Sigmoid colon (tissue), 7 donors: ENCODE measurements at regions of chr14 and their contacts with region 1.

Region 1: GRCh38 chr14:68191567-68192321 is 372.2 kb downstream of the RAD51B start:
- DNase-seq: no peak
- H3K4me3 ChIP-seq: no peak overlapping the region
- H3K27ac ChIP-seq: peak overlapping the region in 3 of 4 donors; percentile 82 to 87 (median 85)
- H3K4me1 ChIP-seq: peaks cover 0 to 57% (median 36%) of the 10 kb centered on the region in 4 donors
- H3K27me3 ChIP-seq: no peaks in the 10 kb centered on the region
- CTCF ChIP-seq: no peak
- EP300 ChIP-seq: peak; percentile 71 to 92 (median 86)
- POLR2A ChIP-seq: no peak

Region 2: DNA sequence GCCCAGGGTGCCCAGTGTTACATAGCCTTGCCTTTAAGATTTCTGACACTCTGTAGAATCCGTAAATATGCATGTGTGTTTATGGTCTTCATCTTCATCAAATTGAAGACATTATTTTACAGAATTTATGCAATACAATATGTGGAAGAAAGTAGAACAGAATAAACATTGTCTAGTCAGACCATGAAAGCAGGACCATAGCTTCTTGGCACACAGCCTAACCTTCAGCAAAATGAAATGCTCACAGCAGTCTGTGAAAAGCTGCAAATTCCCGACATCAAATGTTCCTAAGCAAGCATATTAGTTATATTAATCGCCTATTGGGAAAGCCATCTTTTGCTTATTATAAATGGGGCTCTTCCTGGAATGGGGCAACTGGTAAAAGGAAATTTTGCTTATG is 1113.8 kb before region 1 on chr14:
- intact Hi-C with region 1: no loop called
- DNase-seq: no peak
- H3K4me3 ChIP-seq: no peak overlapping the region
- H3K27ac ChIP-seq: no peak overlapping the region
- H3K4me1 ChIP-seq: no peaks in the 10 kb centered on the region
- H3K27me3 ChIP-seq: no peaks in the 10 kb centered on the region
- CTCF ChIP-seq: no peak
- EP300 ChIP-seq: no peak
- POLR2A ChIP-seq: no peak

Region 3: GRCh38 chr14:67943947-67944346 is 247.8 kb before region 1 on chr14:
- intact Hi-C with region 1: loop called (anchors 5 kb)
- DNase-seq: peak; percentile 94
- H3K4me3 ChIP-seq: no peak overlapping the region
- H3K27ac ChIP-seq: peak overlapping the region; percentile 29 to 86 (median 82)
- H3K4me1 ChIP-seq: peaks cover 0 to 57% (median 51%) of the 10 kb centered on the region in 4 donors
- H3K27me3 ChIP-seq: no peaks in the 10 kb centered on the region
- CTCF ChIP-seq: peak; percentile 61 to 95 (median 88)
- EP300 ChIP-seq: no peak
- POLR2A ChIP-seq: no peak

Region 4: DNA sequence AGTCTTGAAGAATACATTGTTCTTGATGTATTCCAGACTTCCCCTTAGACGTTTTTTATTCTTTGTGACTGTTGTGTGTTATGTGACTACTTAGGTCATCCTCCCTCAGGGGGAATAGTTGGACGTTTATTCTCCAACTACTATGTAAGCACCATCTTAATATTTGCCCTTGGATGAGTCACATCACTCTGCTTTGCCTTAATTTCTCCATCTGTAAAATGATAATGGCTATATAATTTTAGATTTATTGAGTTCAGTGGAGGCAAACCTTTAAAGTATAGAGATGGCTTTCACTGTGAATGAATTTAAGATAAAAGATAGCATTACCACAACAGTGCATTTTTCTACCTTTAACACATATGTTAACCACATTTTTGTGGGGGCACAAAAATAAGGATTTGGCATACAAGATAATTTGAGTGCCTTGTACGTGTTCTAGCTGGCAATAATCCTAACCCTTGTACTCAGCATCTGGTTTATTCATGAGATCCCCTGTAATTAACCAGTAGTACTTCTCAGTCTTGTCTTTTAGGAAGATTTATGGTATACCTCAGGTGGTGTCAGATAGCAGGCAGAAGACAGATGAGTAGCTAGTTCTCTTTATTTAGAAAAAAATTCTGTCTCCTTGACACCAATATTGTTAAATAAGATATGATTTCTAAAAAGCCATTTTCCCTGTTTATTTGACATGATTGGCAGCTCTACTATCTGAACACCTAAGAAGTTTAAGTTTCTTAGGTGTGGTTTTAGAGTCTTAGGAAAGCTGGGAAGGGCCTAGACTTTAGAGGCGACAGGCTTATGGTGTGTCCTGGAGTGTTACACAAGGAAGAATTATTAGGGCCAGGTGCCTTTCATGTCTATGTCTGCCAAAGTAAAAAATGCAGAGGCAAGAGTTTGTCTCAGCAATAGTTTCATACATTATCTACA is 219.9 kb before region 1 on chr14:
- intact Hi-C with region 1: no loop called
- DNase-seq: no peak
- H3K4me3 ChIP-seq: no peak overlapping the region
- H3K27ac ChIP-seq: peak overlapping the region in 3 of 4 donors; percentile 74 to 80 (median 78)
- H3K4me1 ChIP-seq: peaks cover 0 to 39% (median 28%) of the 10 kb centered on the region in 4 donors
- H3K27me3 ChIP-seq: no peaks in the 10 kb centered on the region
- CTCF ChIP-seq: no peak
- EP300 ChIP-seq: peak; percentile 52 to 88 (median 70)
- POLR2A ChIP-seq: no peak

Region 5: DNA sequence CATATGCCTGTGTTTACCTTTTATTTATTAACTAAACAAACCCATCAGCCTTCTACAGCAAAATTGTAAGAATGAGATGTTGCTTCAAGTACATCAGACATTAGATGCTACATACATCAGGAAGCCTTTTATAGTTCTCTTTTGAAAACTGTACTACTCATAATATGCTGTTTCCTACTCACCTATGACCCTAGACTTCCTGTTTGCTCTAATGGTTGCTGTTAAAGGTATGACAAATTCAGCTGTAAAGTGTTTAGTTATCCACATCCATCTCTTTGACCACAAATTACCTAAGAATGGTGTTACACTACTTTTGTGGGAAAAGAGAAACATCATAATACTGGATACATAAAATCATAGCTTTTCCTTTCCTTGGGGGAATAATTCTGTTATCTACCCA is 152.2 kb before region 1 on chr14:
- intact Hi-C with region 1: loop called (anchors 5 kb)
- DNase-seq: no peak
- H3K4me3 ChIP-seq: no peak overlapping the region
- H3K27ac ChIP-seq: peak overlapping the region; percentile 22 to 90 (median 85)
- H3K4me1 ChIP-seq: peaks cover 0 to 92% (median 61%) of the 10 kb centered on the region in 4 donors
- H3K27me3 ChIP-seq: no peaks in the 10 kb centered on the region
- CTCF ChIP-seq: no peak
- EP300 ChIP-seq: no peak
- POLR2A ChIP-seq: no peak

Region 6: GRCh38 chr14:68137704-68138619 is 53.8 kb before region 1 on chr14:
- intact Hi-C with region 1: loop called (anchors 2 kb)
- DNase-seq: peak; percentile 81
- H3K4me3 ChIP-seq: no peak overlapping the region
- H3K27ac ChIP-seq: peak overlapping the region; percentile 86 to 92 (median 88)
- H3K4me1 ChIP-seq: peaks cover 0 to 72% (median 60%) of the 10 kb centered on the region in 4 donors
- H3K27me3 ChIP-seq: no peaks in the 10 kb centered on the region
- CTCF ChIP-seq: no peak
- EP300 ChIP-seq: no peak
- POLR2A ChIP-seq: no peak

Region 7: GRCh38 chr14:68234101-68234905 is 42.6 kb after region 1 on chr14:
- intact Hi-C with region 1: no loop called
- DNase-seq: no peak
- H3K4me3 ChIP-seq: no peak overlapping the region
- H3K27ac ChIP-seq: peak overlapping the region; percentile 79 to 88 (median 82)
- H3K4me1 ChIP-seq: peaks cover 0 to 68% (median 57%) of the 10 kb centered on the region in 4 donors
- H3K27me3 ChIP-seq: no peaks in the 10 kb centered on the region
- CTCF ChIP-seq: no peak
- EP300 ChIP-seq: no peak
- POLR2A ChIP-seq: no peak

Region 8: GRCh38 chr14:68526420-68527105 is 334.8 kb after region 1 on chr14:
- intact Hi-C with region 1: loop called (anchors 5 kb)
- DNase-seq: no peak
- H3K4me3 ChIP-seq: no peak overlapping the region
- H3K27ac ChIP-seq: peak overlapping the region; percentile 49 to 73 (median 66)
- H3K4me1 ChIP-seq: peaks cover 0 to 52% (median 38%) of the 10 kb centered on the region in 4 donors
- H3K27me3 ChIP-seq: no peaks in the 10 kb centered on the region
- CTCF ChIP-seq: no peak
- EP300 ChIP-seq: no peak
- POLR2A ChIP-seq: no peak